ENCODE measurements at regions of chr3 and their contacts with region 1.

Region 1: GRCh38 chr3:16247276-16248061 is 17.3 kb downstream of the DPH3 start:
- DNase-seq: peak; percentile 73 to 80
- H3K4me3 ChIP-seq: no peak overlapping the region
- H3K4me3 Mint-ChIP-seq: peak overlapping the region; percentile 2
- H3K27ac Mint-ChIP-seq: no peak overlapping the region
- H3K4me1 ChIP-seq: peaks cover 20% of the 10 kb centered on the region
- H3K4me1 Mint-ChIP-seq: peaks cover 5% of the 10 kb centered on the region
- H3K27me3 ChIP-seq: no peaks in the 10 kb centered on the region
- H3K27me3 Mint-ChIP-seq: peaks cover 2% of the 10 kb centered on the region
- CTCF ChIP-seq: peak; percentile 80 to 86

Region 2: GRCh38 chr3:15629860-15630597 is 617.4 kb before region 1 on chr3:
- CTCF ChIA-PET with region 1: no interaction called
- POLR2A ChIA-PET with region 1: no interaction called
- intact Hi-C with region 1: loop called (anchors 1 kb)
- DNase-seq: peak; percentile 47 to 68
- H3K4me3 ChIP-seq: no peak overlapping the region
- H3K4me3 Mint-ChIP-seq: no peak overlapping the region
- H3K27ac Mint-ChIP-seq: no peak overlapping the region
- H3K4me1 ChIP-seq: no peaks in the 10 kb centered on the region
- H3K4me1 Mint-ChIP-seq: no peaks in the 10 kb centered on the region
- H3K27me3 ChIP-seq: no peaks in the 10 kb centered on the region
- H3K27me3 Mint-ChIP-seq: no peaks in the 10 kb centered on the region
- CTCF ChIP-seq: peak; percentile 50 to 58

Region 3: DNA sequence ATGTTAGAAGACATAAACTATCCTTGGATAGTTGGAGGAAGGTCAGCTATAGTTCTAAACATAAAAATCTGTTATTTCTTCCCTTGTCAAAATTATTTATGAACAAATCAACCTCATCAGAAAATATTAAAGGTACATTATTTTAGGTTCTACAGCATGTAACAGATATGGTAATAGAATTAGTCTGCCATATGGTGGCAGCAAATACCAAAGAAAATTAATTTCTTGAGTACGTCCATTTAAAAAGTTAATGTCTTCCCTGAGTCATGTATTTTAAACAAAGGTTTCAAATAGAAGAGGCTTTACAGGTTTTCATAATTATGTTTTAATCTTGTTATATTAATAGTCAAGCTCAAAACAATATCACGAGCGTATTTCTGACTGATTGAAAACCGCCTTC is 431.8 kb before region 1 on chr3:
- CTCF ChIA-PET with region 1: no interaction called
- POLR2A ChIA-PET with region 1: no interaction called
- intact Hi-C with region 1: loop called (anchors 1 kb)
- DNase-seq: peak in 1 of 2 experiments; percentile 10
- H3K4me3 ChIP-seq: no peak overlapping the region
- H3K4me3 Mint-ChIP-seq: no peak overlapping the region
- H3K27ac Mint-ChIP-seq: no peak overlapping the region
- H3K4me1 ChIP-seq: no peaks in the 10 kb centered on the region
- H3K4me1 Mint-ChIP-seq: no peaks in the 10 kb centered on the region
- H3K27me3 ChIP-seq: no peaks in the 10 kb centered on the region
- H3K27me3 Mint-ChIP-seq: no peaks in the 10 kb centered on the region
- CTCF ChIP-seq: peak in 1 of 2 experiments; percentile 11

Region 4: DNA sequence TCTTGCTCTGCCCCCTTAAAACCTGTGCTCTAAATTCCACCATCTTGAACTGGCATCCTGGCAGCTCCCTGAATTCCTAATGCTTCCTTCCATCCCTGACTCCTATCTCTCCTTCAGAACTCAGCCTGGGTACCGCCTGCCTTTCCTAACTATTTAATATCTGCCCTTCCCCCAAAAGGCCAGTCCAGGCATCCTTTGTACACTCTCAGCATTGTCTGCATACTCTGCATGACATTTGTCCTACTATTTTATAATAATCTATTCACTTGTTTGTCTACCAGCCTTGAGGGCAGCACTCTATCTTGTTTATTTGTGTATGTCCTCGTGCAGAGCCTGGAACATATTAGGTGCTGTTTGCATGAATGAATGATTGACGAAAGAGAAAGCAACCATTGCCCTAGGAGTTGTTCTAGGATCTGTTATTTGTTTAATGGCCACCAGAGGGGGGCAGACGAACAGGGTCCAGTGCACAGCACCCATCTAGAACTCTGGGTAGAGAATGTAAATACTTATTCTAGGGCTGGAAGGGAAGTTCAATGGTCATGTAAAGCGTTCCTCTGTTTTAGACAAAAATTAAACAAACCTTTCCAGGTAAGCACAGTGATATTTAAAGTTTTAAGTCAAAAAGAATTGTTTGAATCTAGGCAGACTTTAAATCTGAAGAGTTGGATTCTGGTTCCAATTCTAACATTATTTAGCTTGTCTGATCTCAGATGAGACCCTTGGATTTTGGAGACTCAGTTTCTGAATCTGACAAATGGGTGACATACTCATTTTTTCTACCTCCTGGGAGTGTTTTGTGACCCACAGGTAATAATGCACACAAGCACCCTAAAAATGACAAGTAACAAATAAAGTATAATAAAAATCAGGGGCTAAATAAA is 198.8 kb before region 1 on chr3:
- CTCF ChIA-PET with region 1: no interaction called
- POLR2A ChIA-PET with region 1: no interaction called
- intact Hi-C with region 1: loop called (anchors 1 kb)
- DNase-seq: peak; percentile 49 to 74
- H3K4me3 ChIP-seq: no peak overlapping the region
- H3K4me3 Mint-ChIP-seq: no peak overlapping the region
- H3K27ac Mint-ChIP-seq: no peak overlapping the region
- H3K4me1 ChIP-seq: no peaks in the 10 kb centered on the region
- H3K4me1 Mint-ChIP-seq: no peaks in the 10 kb centered on the region
- H3K27me3 ChIP-seq: no peaks in the 10 kb centered on the region
- H3K27me3 Mint-ChIP-seq: no peaks in the 10 kb centered on the region
- CTCF ChIP-seq: peak; percentile 75 to 79

Region 5: DNA sequence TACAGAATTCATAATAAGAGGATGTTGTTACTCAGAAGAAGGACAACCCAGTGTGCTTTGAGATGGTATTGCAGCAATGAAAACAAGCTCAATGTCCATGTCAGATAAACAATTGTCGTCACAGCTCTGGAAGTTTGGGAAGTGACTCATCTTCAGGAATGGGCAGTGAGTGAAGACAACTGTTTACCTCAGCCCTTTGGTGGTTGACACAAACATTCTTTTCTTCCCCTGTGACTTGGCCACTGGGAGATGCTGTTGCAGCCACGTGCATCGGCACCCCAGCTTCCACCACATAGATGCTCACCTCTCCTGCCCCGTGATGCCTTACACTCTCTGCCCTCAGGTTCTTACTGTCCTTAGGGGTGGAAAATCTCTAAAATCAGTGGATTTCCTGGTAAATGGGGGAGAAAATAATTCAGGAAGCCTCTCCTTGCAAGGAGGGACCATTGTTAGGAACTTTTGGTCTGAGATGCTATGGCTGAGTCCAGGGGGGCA is 187.1 kb before region 1 on chr3:
- CTCF ChIA-PET with region 1: no interaction called
- POLR2A ChIA-PET with region 1: no interaction called
- intact Hi-C with region 1: loop called (anchors 5 kb)
- DNase-seq: peak; percentile 77 to 80
- H3K4me3 ChIP-seq: no peak overlapping the region
- H3K4me3 Mint-ChIP-seq: peak overlapping the region; percentile 9
- H3K27ac Mint-ChIP-seq: peak overlapping the region; percentile 91
- H3K4me1 ChIP-seq: peaks cover 12% of the 10 kb centered on the region
- H3K4me1 Mint-ChIP-seq: peaks cover 24% of the 10 kb centered on the region
- H3K27me3 ChIP-seq: no peaks in the 10 kb centered on the region
- H3K27me3 Mint-ChIP-seq: no peaks in the 10 kb centered on the region
- CTCF ChIP-seq: peak in 1 of 2 experiments; percentile 45

Region 6: DNA sequence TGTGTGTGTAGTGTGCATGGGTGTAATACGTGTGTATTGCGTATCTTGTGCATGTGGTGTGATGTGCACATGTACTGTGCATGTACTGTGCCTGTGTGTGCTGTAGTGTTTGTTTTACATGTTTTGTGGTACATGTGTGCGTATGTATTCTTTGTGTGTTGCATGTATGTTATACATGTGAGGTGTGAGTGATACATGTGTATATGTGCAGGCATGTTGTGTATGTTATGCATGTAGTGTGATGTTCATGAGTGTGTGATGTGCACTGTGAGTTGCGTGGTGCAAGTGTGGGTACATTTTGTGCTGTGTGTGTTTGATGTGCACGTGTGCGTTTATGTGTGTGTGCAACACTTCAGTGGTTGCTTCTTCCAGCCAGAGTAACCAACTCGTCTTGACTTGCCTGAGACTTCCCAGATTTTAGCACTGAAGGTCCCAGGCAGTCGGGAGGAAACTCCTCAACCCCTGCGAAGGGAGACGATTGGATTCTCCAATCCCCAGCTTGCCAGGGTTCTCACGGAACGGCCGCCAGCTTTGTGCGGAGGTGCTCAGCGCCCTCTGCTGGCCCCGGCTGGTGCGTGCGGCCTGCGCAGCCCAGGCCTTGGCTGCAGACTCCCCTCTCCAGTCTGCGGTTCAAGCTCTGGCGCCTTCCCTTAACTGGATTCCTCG is 69.4 kb before region 1 on chr3:
- CTCF ChIA-PET with region 1: interaction called, 4 read pairs
- POLR2A ChIA-PET with region 1: no interaction called
- intact Hi-C with region 1: loop called (anchors 1 kb)
- DNase-seq: peak; percentile 54 to 81
- H3K4me3 ChIP-seq: no peak overlapping the region
- H3K4me3 Mint-ChIP-seq: no peak overlapping the region
- H3K27ac Mint-ChIP-seq: no peak overlapping the region
- H3K4me1 ChIP-seq: no peaks in the 10 kb centered on the region
- H3K4me1 Mint-ChIP-seq: no peaks in the 10 kb centered on the region
- H3K27me3 ChIP-seq: no peaks in the 10 kb centered on the region; the same call in 1 of the 2 replicates
- H3K27me3 Mint-ChIP-seq: peaks cover 3% of the 10 kb centered on the region
- CTCF ChIP-seq: peak; percentile 82 to 95

Region 7: GRCh38 chr3:16203031-16203430 is 44.4 kb before region 1 on chr3:
- CTCF ChIA-PET with region 1: no interaction called
- POLR2A ChIA-PET with region 1: no interaction called
- intact Hi-C with region 1: no loop called
- DNase-seq: no peak
- H3K4me3 ChIP-seq: no peak overlapping the region
- H3K4me3 Mint-ChIP-seq: no peak overlapping the region
- H3K27ac Mint-ChIP-seq: no peak overlapping the region
- H3K4me1 ChIP-seq: no peaks in the 10 kb centered on the region
- H3K4me1 Mint-ChIP-seq: peaks cover 8% of the 10 kb centered on the region
- H3K27me3 ChIP-seq: no peaks in the 10 kb centered on the region
- H3K27me3 Mint-ChIP-seq: no peaks in the 10 kb centered on the region
- CTCF ChIP-seq: no peak

Region 8: GRCh38 chr3:16264708-16265454 is 17.4 kb after region 1 on chr3 and contains the starts of genes DPH3 and OXNAD1:
- CTCF ChIA-PET with region 1: interaction called, 4 read pairs
- POLR2A ChIA-PET with region 1: interaction called, 12 read pairs
- intact Hi-C with region 1: no loop called
- DNase-seq: peak; percentile 99
- H3K4me3 ChIP-seq: peak within 1 kb of the TSS; percentile 76
- H3K4me3 Mint-ChIP-seq: peak within 1 kb of the TSS; percentile 76
- H3K27ac Mint-ChIP-seq: peak within 1 kb of the TSS; percentile 71
- H3K4me1 ChIP-seq: peaks cover 5% of the 10 kb centered on the region
- H3K4me1 Mint-ChIP-seq: peaks cover 14% of the 10 kb centered on the region
- H3K27me3 ChIP-seq: no peaks in the 10 kb centered on the region
- H3K27me3 Mint-ChIP-seq: no peaks in the 10 kb centered on the region
- CTCF ChIP-seq: no peak
- total RNA-seq, gene DPH3: 25.6 and 30.0 TPM in 2 replicates
- total RNA-seq, gene OXNAD1: 20.0 and 22.9 TPM in 2 replicates